ENCODE measurements at regions of chr2 and their contacts with region 1.

Region 1: GRCh38 chr2:173210270-173211196 is 134.9 kb downstream of the MAP3K20 start:
- DNase-seq: peak; percentile 68 to 92
- ATAC-seq: peak; percentile 96 to 99
- H3K4me3 ChIP-seq: no peak overlapping the region
- H3K27ac ChIP-seq: peak overlapping the region; percentile 55 to 75
- H3K4me1 ChIP-seq: peaks cover 15% of the 10 kb centered on the region
- CTCF ChIP-seq: peak; percentile 96
- EP300 ChIP-seq: peak in 1 of 2 experiments; percentile 21; a peak in 1 of 5 replicates
- POLR2A ChIP-seq: no peak
- RAD21 ChIP-seq: peak; percentile 97 to 98

Region 2: GRCh38 chr2:172361360-172361759 is 849.2 kb before region 1 on chr2:
- CTCF ChIA-PET with region 1: no interaction called
- POLR2A ChIA-PET with region 1: no interaction called
- DNase-seq: no peak
- ATAC-seq: no peak
- H3K4me3 ChIP-seq: no peak overlapping the region
- H3K27ac ChIP-seq: no peak overlapping the region
- H3K4me1 ChIP-seq: no peaks in the 10 kb centered on the region; the same call in 2 of the 3 replicates
- CTCF ChIP-seq: no peak
- EP300 ChIP-seq: no peak
- POLR2A ChIP-seq: no peak
- RAD21 ChIP-seq: no peak

Region 3: DNA sequence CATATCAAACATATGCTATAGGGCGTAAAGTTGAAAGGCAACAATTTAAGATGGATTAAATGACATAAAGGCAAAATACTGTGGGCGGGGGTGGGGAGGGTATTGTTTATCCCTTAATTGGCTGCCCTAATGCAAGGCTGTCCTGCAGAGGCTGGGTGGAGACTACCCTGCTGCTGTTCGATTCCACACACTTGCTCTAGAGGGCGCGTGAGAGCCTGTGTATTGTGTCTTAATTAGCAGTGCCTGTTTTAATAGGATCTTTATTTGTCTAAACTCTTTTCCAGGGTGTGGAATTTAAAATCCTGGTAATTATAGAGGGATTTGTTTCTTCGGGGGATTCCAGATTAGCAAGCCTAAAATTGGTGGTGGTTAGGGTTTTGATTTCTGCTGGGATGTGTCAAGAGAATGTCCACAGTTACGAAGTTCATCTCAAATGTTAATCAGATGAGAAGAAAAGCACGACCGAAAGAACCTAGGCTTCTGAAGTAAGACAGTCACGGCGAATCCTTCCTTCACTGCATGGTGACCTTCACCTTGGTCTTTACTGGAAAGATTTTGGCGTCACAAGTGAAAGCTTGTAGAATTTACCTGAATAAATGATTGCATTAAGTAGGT is 238.4 kb before region 1 on chr2:
- CTCF ChIA-PET with region 1: interaction called, 10 read pairs
- POLR2A ChIA-PET with region 1: no interaction called
- DNase-seq: peak; percentile 52 to 53
- ATAC-seq: peak; percentile 70 to 86; a peak in 4 of 6 replicates
- H3K4me3 ChIP-seq: no peak overlapping the region
- H3K27ac ChIP-seq: no peak overlapping the region
- H3K4me1 ChIP-seq: peaks cover 21% of the 10 kb centered on the region
- CTCF ChIP-seq: peak; percentile 77
- EP300 ChIP-seq: no peak
- POLR2A ChIP-seq: no peak
- RAD21 ChIP-seq: peak; percentile 61 to 68

Region 4: GRCh38 chr2:173075781-173076580 is 134.6 kb before region 1 on chr2 and contains the start of gene MAP3K20:
- CTCF ChIA-PET with region 1: interaction called, 18 read pairs
- POLR2A ChIA-PET with region 1: no interaction called
- DNase-seq: peak in 1 of 2 experiments; percentile 77
- ATAC-seq: peak; percentile 80 to 84
- H3K4me3 ChIP-seq: peak within 1 kb of the TSS; percentile 88
- H3K27ac ChIP-seq: peak within 1 kb of the TSS; percentile 94 to 98
- H3K4me1 ChIP-seq: peaks cover 36% of the 10 kb centered on the region
- CTCF ChIP-seq: peak; percentile 48; the same call in 2 of the 3 replicates
- EP300 ChIP-seq: no peak
- POLR2A ChIP-seq: peak; percentile 60
- RAD21 ChIP-seq: peak; percentile 60 to 76
- polyA plus RNA-seq, gene MAP3K20: 76.7 and 80.7 TPM in 2 replicates

Region 5: DNA sequence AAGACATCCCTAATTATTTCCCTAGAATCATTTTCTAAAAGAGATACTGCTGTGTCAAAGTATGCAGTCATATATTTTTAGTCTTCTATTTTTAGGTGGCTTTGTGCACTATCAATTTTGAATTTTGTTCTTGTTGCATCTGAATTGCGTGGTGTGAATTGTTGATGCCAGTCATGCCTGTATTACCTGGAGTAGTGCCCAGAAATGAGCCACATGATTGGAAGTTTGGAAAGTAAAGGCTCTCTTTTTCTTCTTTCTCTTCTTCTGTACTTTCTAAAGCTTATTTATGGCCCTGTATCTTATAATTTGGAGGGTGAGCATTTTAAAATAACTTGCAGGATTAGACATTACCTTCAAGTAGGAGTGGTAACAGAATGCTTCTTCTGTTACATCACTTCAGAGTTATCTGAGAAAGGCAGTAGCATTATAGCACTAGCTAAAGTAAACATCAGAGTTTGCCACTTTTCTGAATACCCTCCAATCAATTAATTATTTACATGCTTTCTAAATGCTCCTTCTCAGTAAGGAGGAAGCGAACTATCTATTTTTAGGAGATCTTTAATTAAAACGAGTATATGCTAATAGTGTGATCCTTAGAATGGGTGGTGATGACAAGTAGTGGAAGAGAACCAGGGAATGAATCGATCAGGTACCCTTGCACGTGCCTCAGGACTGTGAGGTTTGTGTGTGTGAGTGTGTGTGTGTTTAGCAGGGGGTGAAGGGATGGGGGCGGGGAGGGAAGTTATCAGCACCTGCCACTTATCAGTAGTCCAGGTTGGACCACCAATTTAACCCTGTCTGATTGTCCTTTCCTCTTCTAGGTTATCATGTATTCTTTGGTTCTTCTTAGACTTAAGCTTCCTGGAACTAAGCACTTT is 22.4 kb before region 1 on chr2:
- CTCF ChIA-PET with region 1: interaction called, 12 read pairs
- POLR2A ChIA-PET with region 1: interaction called, 7 read pairs
- DNase-seq: no peak
- ATAC-seq: no peak
- H3K4me3 ChIP-seq: no peak overlapping the region
- H3K27ac ChIP-seq: peak overlapping the region; percentile 43 to 70; a peak in 5 of 6 replicates
- H3K4me1 ChIP-seq: peaks cover 74% of the 10 kb centered on the region
- CTCF ChIP-seq: no peak
- EP300 ChIP-seq: no peak
- POLR2A ChIP-seq: no peak
- RAD21 ChIP-seq: no peak

Region 6: DNA sequence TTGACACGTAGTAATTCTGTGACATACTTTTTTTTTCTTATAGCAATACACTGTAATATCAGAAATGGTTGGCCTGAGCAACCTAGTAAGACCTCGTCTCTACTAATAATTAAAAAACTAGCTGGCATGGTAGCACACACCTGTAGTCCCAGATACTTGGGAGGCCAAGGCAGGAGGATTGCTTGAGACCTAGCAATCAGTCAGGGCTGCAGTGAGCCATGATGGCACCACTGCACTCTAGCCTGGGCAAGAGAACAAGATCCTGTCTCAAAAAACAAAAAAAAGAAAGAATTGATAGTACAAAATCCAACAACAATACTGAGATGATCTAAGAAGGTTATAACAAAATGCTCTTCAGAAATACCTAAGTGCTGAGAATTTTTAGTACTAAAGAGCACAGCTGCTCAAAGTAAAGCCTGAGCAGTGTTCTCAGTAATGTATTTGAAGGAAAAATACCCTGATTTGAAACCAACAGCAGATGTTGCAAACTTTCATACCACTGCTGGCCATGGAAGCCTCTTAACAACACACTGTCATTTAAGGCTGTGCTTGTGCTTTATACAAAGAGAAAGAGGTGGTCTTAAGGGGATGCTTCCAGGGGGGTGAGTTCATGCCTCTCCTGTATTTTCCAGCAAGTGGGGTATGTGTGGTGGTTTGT is 11.5 kb after region 1 on chr2:
- CTCF ChIA-PET with region 1: interaction called, 13 read pairs
- POLR2A ChIA-PET with region 1: no interaction called
- DNase-seq: no peak
- ATAC-seq: no peak
- H3K4me3 ChIP-seq: no peak overlapping the region
- H3K27ac ChIP-seq: no peak overlapping the region
- H3K4me1 ChIP-seq: peaks cover 25% of the 10 kb centered on the region
- CTCF ChIP-seq: no peak
- EP300 ChIP-seq: no peak
- POLR2A ChIP-seq: no peak
- RAD21 ChIP-seq: no peak